ENCODE measurements at regions of chr4 and their contacts with region 1.

Region 1: DNA sequence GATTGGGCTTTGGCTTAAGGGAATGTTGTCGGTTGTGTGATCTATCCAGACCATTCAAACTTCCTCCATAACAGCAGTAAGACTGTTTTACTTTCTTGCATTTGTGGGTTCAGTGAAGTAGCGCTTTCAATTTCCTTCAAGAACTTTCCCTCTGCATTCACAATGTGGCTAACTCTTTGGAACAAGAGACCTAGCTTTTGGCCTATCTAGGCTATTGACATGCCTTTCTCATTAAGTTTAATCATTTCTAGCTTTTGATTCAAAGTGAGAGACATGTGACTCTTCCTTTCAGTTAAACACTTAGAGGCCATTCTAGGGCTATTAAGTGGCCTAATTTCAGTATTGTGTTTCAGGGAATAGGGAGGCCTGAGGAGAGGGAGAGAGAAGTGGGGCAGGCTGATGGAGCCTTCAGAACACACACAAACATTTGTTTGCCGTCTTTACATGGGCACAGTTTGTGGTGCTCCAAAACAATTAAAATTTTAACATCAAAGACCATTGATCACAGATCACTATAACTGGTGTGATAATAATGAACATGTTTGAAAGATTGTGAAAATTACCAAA is 34.1 kb downstream of the ADH5 start:
- DNase-seq: no peak
- H3K4me3 ChIP-seq: no peak overlapping the region
- H3K27ac ChIP-seq: no peak overlapping the region
- H3K4me1 ChIP-seq: peaks cover 7% of the 10 kb centered on the region
- H3K27me3 ChIP-seq: no peaks in the 10 kb centered on the region
- CTCF ChIP-seq: no peak

Region 2: DNA sequence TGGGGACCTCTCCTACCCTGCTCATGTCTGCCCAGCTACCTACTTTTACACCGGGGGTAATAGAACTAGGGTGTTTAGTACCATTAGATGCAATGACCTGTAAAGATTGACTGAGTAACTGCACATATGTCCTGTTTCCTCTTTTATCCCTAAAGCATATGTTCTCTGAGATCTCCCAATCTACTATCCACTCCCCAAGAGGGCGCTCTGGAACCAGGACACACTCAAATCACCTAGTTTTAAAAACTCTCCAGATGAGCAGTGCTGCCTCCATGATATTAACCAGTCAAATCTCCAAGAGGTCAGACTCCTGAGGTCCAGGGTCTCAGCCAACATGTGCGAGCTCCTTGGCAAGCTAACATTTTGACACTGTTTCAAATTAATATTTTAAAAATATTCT is 309.1 kb before region 1 on chr4:
- CTCF ChIA-PET with region 1: no interaction called
- POLR2A ChIA-PET with region 1: no interaction called
- intact Hi-C with region 1: loop called (anchors 10 kb)
- DNase-seq: peak; percentile 46
- H3K4me3 ChIP-seq: no peak overlapping the region
- H3K27ac ChIP-seq: no peak overlapping the region
- H3K4me1 ChIP-seq: peaks cover 46% of the 10 kb centered on the region
- H3K27me3 ChIP-seq: no peaks in the 10 kb centered on the region
- CTCF ChIP-seq: peak; percentile 67

Region 3: DNA sequence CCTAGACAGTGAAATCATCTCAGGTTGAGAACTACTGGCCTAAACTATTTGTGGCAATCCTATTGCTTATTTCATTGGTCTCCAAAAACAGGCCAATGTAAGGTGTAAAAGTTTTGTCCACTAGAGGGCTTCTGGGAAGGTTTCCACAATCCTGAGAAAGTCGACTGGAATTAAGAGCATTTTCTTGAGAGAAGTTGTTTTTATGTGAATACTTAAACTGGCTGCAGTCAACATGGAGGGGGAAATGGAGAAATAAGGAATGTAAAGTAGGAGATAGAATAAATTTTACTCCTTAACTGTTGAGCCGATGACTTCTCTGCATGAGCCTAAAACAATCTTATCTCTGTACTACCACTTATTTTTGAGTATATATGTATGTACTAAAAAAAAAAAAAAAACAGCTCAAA is 114.6 kb before region 1 on chr4:
- CTCF ChIA-PET with region 1: no interaction called
- POLR2A ChIA-PET with region 1: no interaction called
- intact Hi-C with region 1: loop called (anchors 10 kb)
- DNase-seq: peak; percentile 81
- H3K4me3 ChIP-seq: no peak overlapping the region
- H3K27ac ChIP-seq: no peak overlapping the region
- H3K4me1 ChIP-seq: peaks cover 4% of the 10 kb centered on the region
- H3K27me3 ChIP-seq: no peaks in the 10 kb centered on the region
- CTCF ChIP-seq: peak; percentile 81

Region 4: GRCh38 chr4:98995183-98996055 is 59.1 kb before region 1 on chr4 and contains the start of gene METAP1:
- CTCF ChIA-PET with region 1: interaction called, 15 read pairs
- POLR2A ChIA-PET with region 1: no interaction called
- intact Hi-C with region 1: loop called (anchors 1 kb)
- DNase-seq: peak; percentile 97
- H3K4me3 ChIP-seq: peak within 1 kb of the TSS; percentile 84
- H3K27ac ChIP-seq: peak within 1 kb of the TSS; percentile 83
- H3K4me1 ChIP-seq: no peaks in the 10 kb centered on the region
- H3K27me3 ChIP-seq: no peaks in the 10 kb centered on the region
- CTCF ChIP-seq: peak; percentile 70
- total RNA-seq, gene METAP1: 72.2 and 81.3 TPM in 2 replicates